ENCODE measurements at regions of chr5 and their contacts with region 1.

Region 1: DNA sequence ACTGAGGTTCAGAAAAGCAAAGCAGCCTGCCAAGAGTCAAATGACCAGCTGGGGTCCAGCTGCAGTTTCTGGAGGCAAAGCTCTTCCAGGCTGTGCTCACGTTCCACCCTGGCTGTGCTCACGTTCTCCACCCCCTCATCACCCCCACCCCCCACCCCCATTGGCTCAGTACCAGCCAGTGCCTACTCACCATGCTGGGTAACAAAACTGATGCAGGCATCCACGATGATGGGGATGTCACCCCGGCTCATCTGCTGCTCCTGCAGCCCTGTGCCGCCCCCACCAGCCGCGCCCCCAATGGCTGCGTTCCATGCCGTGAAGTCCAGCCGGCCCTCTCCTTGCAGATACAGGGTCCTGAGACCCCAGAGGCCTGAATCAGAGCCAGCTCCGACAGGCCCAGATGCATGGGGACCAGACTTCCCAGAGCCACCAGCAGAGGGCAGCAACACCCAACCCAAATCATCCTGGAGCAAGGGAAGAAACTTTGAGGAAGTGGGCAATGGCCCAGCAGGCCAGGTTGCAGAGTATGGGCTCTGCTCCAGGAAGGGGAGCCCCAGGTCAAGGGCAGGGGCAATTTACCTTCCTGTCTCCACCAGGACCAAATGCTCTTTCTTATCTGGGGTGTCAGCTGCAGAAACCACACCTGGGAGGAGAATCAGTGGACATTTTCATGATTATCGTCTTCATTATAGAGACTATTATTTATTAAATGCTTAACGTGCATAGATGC is 13.7 kb upstream of the FCHSD1 start:
- DNase-seq: peak; percentile 36 to 87 (median 70)
- ATAC-seq: peak; percentile 74
- H3K4me3 ChIP-seq: no peak overlapping the region
- H3K4me3 Mint-ChIP-seq: no peak overlapping the region
- H3K27ac ChIP-seq: no peak overlapping the region
- H3K27ac Mint-ChIP-seq: no peak overlapping the region
- H3K4me1 ChIP-seq: peaks cover 4% of the 10 kb centered on the region
- H3K4me1 Mint-ChIP-seq: no peaks in the 10 kb centered on the region
- H3K27me3 ChIP-seq: no peaks in the 10 kb centered on the region
- H3K27me3 Mint-ChIP-seq: no peaks in the 10 kb centered on the region
- CTCF ChIP-seq: peak; percentile 96

Region 2: DNA sequence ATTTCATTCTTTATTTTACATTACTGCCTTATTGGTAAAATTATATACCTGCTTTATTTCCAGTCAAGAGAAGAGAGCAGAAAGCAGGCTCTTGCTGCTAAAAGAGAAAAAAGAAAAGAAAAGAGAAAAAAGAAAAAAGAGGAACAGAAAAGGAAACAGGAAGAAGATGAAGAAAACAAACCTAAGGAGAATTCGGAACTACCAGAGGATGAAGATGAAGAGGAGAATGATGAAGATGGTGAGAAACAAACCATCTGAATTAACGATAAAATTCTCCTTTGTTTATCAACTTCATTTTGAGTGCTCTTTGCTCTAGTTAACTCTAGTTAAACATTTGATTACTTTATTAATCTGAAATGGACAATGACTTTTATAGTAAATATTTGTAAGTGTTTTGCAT is 1140.9 kb before region 1 on chr5:
- CTCF ChIA-PET with region 1: no interaction called
- POLR2A ChIA-PET with region 1: no interaction called
- intact Hi-C with region 1: no loop called
- DNase-seq: no peak
- ATAC-seq: no peak
- H3K4me3 ChIP-seq: no peak overlapping the region
- H3K4me3 Mint-ChIP-seq: no peak overlapping the region
- H3K27ac ChIP-seq: no peak overlapping the region
- H3K27ac Mint-ChIP-seq: peak overlapping the region; percentile 18
- H3K4me1 ChIP-seq: no peaks in the 10 kb centered on the region
- H3K4me1 Mint-ChIP-seq: no peaks in the 10 kb centered on the region
- H3K27me3 ChIP-seq: no peaks in the 10 kb centered on the region
- H3K27me3 Mint-ChIP-seq: no peaks in the 10 kb centered on the region
- CTCF ChIP-seq: no peak

Region 3: DNA sequence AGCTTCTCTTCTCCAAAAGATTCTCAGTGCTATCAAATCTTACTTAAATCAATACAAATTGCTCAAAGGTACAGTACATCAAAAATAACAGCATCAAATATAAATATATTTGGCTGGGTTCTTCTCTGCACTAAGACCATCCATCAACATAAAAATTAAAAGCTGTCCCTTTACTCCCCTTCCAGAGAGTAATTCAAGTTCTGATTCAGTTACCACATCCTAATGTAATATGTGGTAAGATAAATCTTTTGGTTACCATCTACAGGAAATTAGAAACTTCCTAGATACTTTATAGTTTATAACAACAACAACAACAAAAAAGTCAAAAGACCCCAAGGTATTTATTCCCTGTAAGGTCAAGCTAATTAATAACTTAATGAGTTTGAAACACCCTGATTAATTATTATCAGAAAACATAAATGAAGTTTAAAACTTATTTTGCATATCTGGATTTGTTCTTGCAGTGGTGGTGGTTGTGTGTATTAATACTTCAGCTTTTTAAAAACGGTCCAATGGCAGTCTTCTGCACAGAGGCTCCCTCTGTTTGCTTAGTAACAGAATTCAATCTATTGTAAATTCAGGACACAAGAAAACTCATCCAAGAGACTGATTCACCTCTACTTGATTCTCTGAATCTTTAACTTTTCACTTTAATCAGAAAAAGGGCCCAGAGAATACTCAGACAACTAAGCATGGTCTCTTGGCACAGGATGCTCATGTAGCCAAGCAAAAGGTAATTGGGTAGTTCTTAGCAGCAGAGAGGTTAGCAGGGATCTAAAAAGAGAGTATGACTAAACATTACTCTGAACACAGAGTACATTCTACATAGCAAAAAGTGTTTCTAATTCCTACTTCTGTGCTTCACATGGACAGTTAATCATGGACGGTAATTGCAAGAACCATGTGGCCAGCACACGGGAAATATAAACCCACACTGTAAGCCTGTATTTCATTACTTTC is 66.2 kb before region 1 on chr5:
- CTCF ChIA-PET with region 1: no interaction called
- POLR2A ChIA-PET with region 1: no interaction called
- intact Hi-C with region 1: no loop called
- DNase-seq: peak in 1 of 14 experiments; percentile 52
- ATAC-seq: peak; percentile 62
- H3K4me3 ChIP-seq: no peak overlapping the region
- H3K4me3 Mint-ChIP-seq: peak overlapping the region; percentile 35
- H3K27ac ChIP-seq: peak overlapping the region in 1 of 2 donors; percentile 75
- H3K27ac Mint-ChIP-seq: peak overlapping the region; percentile 91
- H3K4me1 ChIP-seq: peaks cover 70% of the 10 kb centered on the region
- H3K4me1 Mint-ChIP-seq: peaks cover 80% of the 10 kb centered on the region
- H3K27me3 ChIP-seq: no peaks in the 10 kb centered on the region
- H3K27me3 Mint-ChIP-seq: no peaks in the 10 kb centered on the region
- CTCF ChIP-seq: no peak

Region 4: DNA sequence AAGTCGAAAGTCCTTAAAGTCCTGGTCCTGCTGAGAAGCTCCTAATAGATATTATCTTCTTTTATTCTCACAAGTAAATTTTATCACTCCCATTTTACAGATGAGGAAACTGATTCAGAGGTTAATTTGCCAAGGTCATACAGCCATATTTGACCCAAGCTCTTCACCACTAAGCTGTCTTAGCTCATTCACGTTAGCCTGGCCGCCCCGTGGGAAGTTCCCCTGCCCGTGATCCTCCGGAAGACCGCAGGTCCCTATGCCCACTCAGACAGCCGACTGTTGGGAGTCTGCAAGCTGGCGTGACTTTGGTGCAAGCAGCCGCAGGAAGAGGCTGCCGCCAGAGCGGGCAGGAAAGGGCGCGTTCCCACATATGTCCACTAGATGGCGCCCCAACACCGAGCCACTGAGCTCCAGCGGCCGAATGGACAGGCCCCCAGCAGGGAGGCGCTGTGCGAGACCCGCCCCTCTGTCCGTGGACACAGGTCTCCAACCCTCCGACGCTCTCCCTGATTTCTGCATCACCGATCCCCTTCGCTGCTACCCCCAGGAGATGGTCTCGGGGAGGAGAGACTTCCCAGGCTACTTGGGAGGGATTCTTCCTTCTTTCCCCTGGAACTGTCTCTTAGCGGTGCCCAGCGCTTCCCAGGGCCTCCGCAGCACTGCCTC is 27.1 kb after region 1 on chr5:
- CTCF ChIA-PET with region 1: interaction called, 11 read pairs
- POLR2A ChIA-PET with region 1: interaction called, 4 read pairs
- intact Hi-C with region 1: loop called in 1 of 2 experiments (anchors 2 kb)
- DNase-seq: peak; percentile 66 to 92 (median 84)
- ATAC-seq: peak; percentile 68
- H3K4me3 ChIP-seq: peak overlapping the region; percentile 35
- H3K4me3 Mint-ChIP-seq: peak overlapping the region; percentile 57
- H3K27ac ChIP-seq: no peak overlapping the region
- H3K27ac Mint-ChIP-seq: no peak overlapping the region
- H3K4me1 ChIP-seq: peaks cover 20% of the 10 kb centered on the region
- H3K4me1 Mint-ChIP-seq: peaks cover 23% of the 10 kb centered on the region
- H3K27me3 ChIP-seq: no peaks in the 10 kb centered on the region
- H3K27me3 Mint-ChIP-seq: peaks cover 35% of the 10 kb centered on the region
- CTCF ChIP-seq: peak; percentile 98

Region 5: GRCh38 chr5:141811287-141812155 is 146.6 kb after region 1 on chr5:
- CTCF ChIA-PET with region 1: no interaction called
- POLR2A ChIA-PET with region 1: no interaction called
- intact Hi-C with region 1: loop called in 1 of 2 experiments (anchors 5 kb)
- DNase-seq: peak in 9 of 14 experiments; percentile 1 to 58 (median 13)
- ATAC-seq: peak; percentile 76
- H3K4me3 ChIP-seq: no peak overlapping the region
- H3K4me3 Mint-ChIP-seq: no peak overlapping the region
- H3K27ac ChIP-seq: no peak overlapping the region
- H3K27ac Mint-ChIP-seq: no peak overlapping the region
- H3K4me1 ChIP-seq: no peaks in the 10 kb centered on the region
- H3K4me1 Mint-ChIP-seq: no peaks in the 10 kb centered on the region
- H3K27me3 ChIP-seq: peaks cover 32 to 55% of the 10 kb centered on the region in 2 experiments
- H3K27me3 Mint-ChIP-seq: peaks cover 72% of the 10 kb centered on the region
- CTCF ChIP-seq: peak; percentile 55

Region 6: GRCh38 chr5:141821361-141821925 is 156.5 kb after region 1 on chr5:
- CTCF ChIA-PET with region 1: no interaction called
- POLR2A ChIA-PET with region 1: no interaction called
- intact Hi-C with region 1: loop called in 1 of 2 experiments (anchors 5 kb)
- DNase-seq: no peak
- ATAC-seq: no peak
- H3K4me3 ChIP-seq: no peak overlapping the region
- H3K4me3 Mint-ChIP-seq: no peak overlapping the region
- H3K27ac ChIP-seq: no peak overlapping the region
- H3K27ac Mint-ChIP-seq: no peak overlapping the region
- H3K4me1 ChIP-seq: no peaks in the 10 kb centered on the region
- H3K4me1 Mint-ChIP-seq: no peaks in the 10 kb centered on the region
- H3K27me3 ChIP-seq: peaks cover 6 to 9% of the 10 kb centered on the region in 2 experiments
- H3K27me3 Mint-ChIP-seq: peaks cover 19% of the 10 kb centered on the region
- CTCF ChIP-seq: no peak

Region 7: GRCh38 chr5:142087920-142088679 is 423.2 kb after region 1 on chr5:
- CTCF ChIA-PET with region 1: no interaction called
- POLR2A ChIA-PET with region 1: no interaction called
- intact Hi-C with region 1: no loop called
- DNase-seq: peak in 5 of 14 experiments; percentile 22 to 79 (median 56)
- ATAC-seq: peak; percentile 80
- H3K4me3 ChIP-seq: peak overlapping the region; percentile 33
- H3K4me3 Mint-ChIP-seq: peak overlapping the region; percentile 69
- H3K27ac ChIP-seq: no peak overlapping the region
- H3K27ac Mint-ChIP-seq: peak overlapping the region; percentile 86
- H3K4me1 ChIP-seq: peaks cover 30% of the 10 kb centered on the region
- H3K4me1 Mint-ChIP-seq: peaks cover 42% of the 10 kb centered on the region
- H3K27me3 ChIP-seq: no peaks in the 10 kb centered on the region
- H3K27me3 Mint-ChIP-seq: no peaks in the 10 kb centered on the region
- CTCF ChIP-seq: no peak

Region 8: DNA sequence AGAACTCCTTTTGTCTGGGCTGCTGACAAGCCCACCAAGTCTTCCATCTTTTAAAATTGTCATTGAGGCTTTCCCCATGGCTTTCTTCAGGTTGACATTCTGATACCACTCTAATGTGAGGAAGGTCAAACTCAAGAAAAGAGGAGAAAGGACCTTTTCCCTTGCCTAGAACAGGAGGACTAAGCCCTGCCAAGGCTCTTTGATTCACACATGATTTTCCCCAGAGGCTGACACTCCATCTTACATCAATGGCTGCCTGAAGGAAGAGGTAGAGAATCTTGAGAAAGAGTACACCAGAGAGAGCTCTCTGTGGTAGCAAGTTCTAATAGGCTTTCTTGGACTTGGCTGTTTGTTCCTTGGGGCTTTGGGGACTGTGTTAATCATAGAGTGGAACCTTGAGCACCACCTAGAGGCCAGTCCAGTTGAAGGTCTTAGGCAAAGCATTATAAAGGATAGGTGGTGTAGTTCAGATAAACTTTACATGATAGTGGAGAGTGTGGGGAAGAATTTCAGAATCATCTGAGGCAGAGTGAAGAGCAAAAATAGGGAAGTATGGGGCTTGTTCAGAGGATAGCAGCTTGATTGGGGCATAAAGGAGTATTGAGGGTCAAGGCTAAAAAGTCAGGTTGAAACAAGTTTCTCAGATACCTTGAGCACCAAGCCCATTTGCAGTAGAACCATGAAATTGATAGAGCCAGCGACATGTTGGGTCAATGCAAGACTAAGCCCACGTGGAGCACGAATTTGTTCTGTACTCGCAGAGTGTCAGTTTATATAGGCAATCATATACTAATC is 480.4 kb after region 1 on chr5:
- CTCF ChIA-PET with region 1: no interaction called
- POLR2A ChIA-PET with region 1: no interaction called
- intact Hi-C with region 1: loop called in 1 of 2 experiments (anchors 2 kb)
- DNase-seq: peak; percentile 28 to 79 (median 52)
- ATAC-seq: peak; percentile 74
- H3K4me3 ChIP-seq: no peak overlapping the region
- H3K4me3 Mint-ChIP-seq: no peak overlapping the region
- H3K27ac ChIP-seq: no peak overlapping the region
- H3K27ac Mint-ChIP-seq: no peak overlapping the region
- H3K4me1 ChIP-seq: no peaks in the 10 kb centered on the region
- H3K4me1 Mint-ChIP-seq: peaks cover 5% of the 10 kb centered on the region
- H3K27me3 ChIP-seq: no peaks in the 10 kb centered on the region
- H3K27me3 Mint-ChIP-seq: no peaks in the 10 kb centered on the region
- CTCF ChIP-seq: peak; percentile 75

Measured in CD4-positive, alpha-beta T cell (primary cell).